Sigmoid colon (tissue), 7 donors: ENCODE measurements at regions of chr14 and their contacts with region 1.

Region 1: DNA sequence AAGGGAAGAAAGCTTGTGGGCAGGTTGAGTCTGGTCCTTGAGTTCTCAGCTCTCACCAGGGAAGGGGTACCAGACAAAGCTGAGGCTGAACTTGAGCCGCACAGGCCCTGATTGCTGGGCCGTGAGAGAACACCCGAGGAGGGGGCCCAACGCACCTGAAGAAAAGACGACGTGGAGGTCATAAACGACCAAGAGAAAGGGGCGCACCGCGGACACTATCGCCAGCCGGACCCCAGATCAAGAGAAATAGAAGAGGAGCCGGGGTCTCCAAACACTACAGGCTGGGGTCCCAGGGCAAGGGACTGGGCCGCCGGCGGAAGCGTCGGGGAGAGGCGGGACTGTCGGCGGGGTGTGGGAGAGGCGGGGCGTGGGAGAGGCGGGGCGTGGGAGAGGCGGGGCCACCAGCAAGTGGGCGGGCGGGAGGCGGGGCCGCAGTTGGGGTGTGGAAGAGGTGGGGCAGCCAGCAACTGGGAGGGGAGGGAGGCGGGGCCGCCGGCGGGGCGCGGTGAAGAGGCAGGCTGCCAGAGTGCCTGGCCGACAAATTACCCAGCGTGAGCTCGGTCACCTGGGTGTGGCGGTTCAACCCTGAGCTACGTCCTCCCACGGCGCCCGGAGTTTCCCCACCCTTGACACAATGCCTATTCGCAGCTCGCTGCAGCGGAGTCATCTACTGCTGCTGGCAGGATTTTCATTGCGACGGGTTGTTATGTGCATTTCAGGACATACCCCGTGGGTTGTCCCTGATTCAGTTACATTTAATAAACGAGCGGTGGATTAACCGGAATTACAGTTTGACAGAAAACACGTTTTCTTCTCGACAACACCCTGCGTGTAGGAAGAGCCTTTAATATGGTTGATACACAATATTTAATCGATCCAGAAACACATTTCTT is 15.5 kb upstream of the NEMF start:
- DNase-seq: peak; percentile 98
- H3K4me3 ChIP-seq: peak overlapping the region; percentile 50 to 65 (median 60)
- H3K27ac ChIP-seq: peak overlapping the region; percentile 83 to 96 (median 92)
- H3K4me1 ChIP-seq: peaks cover 0 to 33% (median 21%) of the 10 kb centered on the region in 4 donors
- H3K27me3 ChIP-seq: no peaks in the 10 kb centered on the region
- CTCF ChIP-seq: no peak
- EP300 ChIP-seq: peak in 1 of 4 donors; percentile 26
- POLR2A ChIP-seq: peak; percentile 65 to 68

Region 2: DNA sequence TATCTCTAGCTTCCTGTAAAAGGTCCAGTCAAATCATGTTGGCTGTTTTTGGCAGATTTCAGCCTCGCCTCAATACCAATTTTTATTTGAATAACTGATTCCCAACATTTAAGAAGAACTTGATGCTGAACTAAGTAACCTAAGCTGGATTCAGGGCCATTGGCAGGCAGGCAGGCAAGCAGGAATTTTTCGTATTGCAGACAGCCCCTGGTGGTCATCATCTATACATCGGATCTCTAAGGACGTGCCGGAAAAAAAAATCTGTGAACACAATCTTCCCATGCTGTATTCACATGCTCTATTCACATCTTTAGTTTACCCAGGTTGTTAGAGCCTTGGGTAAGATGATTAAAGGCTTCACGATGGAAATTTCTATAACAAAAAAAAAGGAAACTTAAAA is 241.3 kb after region 1 on chr14:
- intact Hi-C with region 1: loop called (anchors 1 kb)
- DNase-seq: no peak
- H3K4me3 ChIP-seq: no peak overlapping the region
- H3K27ac ChIP-seq: no peak overlapping the region
- H3K4me1 ChIP-seq: peaks cover 0 to 4% (median 4%) of the 10 kb centered on the region in 4 donors
- H3K27me3 ChIP-seq: no peaks in the 10 kb centered on the region
- CTCF ChIP-seq: no peak
- EP300 ChIP-seq: no peak
- POLR2A ChIP-seq: no peak

Region 3: DNA sequence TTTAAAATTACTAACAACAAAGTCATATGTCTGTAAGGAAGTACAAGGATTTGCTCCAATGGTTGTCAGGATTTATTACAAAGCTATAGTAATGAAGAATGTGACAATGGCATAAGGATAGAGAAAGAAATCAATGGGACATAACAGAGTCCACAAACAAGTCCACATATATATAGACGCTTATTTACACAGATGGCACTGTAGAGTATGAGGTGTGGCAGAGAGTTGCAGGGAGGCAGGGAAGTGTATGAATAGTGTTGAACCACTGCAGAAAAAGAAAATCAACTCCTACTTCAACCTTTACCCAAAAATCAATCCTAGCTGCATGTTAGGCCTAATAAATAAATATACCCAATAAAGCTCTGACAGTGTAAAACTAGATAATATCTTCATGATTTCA is 342.0 kb after region 1 on chr14:
- intact Hi-C with region 1: no loop called
- DNase-seq: no peak
- H3K4me3 ChIP-seq: no peak overlapping the region
- H3K27ac ChIP-seq: no peak overlapping the region
- H3K4me1 ChIP-seq: peaks cover 0 to 18% (median 3%) of the 10 kb centered on the region in 4 donors
- H3K27me3 ChIP-seq: no peaks in the 10 kb centered on the region
- CTCF ChIP-seq: no peak
- EP300 ChIP-seq: no peak
- POLR2A ChIP-seq: no peak

Region 4: DNA sequence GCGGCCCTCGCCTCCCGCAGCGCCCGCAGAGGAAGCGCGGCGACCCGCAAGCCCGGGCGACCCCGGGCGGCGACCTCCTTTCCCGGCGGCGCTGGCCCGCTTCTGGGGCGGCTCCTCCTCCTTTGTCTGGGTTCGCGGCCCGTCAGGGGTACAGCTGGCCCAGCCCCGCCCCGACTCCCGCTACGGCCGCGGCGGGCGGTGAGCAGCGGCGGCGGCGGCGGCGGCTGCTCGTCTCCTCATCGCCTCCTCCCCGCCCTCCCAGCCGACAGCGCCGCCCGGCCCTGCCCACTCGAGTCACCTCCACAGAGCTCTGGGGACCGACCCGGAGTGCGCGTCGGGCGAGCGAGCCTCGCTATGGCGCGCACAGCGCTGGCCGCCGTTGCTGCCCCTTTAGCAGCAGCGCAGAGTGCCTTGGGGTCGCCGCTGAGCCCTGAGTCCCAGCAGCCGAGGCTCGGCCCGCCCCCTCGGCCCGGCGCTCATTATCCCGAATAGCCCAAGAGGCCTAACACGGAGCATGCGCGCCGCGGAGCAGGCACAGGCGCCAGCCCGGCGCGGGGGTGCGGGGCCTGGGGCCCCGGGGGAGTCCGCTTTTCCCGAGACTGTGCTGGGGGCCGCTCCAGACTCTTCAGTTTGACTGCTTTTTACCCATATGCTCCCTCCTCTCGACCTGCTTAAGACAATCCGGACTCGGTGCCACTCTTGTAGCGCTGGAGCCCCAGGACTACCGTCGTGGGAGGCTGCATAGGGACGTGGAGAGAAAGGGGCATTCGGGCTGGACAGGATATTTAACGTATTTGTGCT is 363.6 kb after region 1 on chr14 and contains the start of gene SOS2:
- intact Hi-C with region 1: loop called (anchors 5 kb)
- DNase-seq: peak; percentile 94
- H3K4me3 ChIP-seq: peak within 1 kb of the TSS; percentile 59 to 89 (median 70)
- H3K27ac ChIP-seq: peak within 1 kb of the TSS; percentile 95 to 99 (median 98)
- H3K4me1 ChIP-seq: peaks cover 0 to 53% (median 38%) of the 10 kb centered on the region in 4 donors
- H3K27me3 ChIP-seq: no peaks in the 10 kb centered on the region
- CTCF ChIP-seq: no peak
- EP300 ChIP-seq: no peak
- POLR2A ChIP-seq: peak; percentile 12 to 49
- total RNA-seq, gene SOS2: 31.9 to 40.4 (median 38.7) TPM